ENCODE measurements at regions of chr9 and their contacts with region 1.

Region 1: DNA sequence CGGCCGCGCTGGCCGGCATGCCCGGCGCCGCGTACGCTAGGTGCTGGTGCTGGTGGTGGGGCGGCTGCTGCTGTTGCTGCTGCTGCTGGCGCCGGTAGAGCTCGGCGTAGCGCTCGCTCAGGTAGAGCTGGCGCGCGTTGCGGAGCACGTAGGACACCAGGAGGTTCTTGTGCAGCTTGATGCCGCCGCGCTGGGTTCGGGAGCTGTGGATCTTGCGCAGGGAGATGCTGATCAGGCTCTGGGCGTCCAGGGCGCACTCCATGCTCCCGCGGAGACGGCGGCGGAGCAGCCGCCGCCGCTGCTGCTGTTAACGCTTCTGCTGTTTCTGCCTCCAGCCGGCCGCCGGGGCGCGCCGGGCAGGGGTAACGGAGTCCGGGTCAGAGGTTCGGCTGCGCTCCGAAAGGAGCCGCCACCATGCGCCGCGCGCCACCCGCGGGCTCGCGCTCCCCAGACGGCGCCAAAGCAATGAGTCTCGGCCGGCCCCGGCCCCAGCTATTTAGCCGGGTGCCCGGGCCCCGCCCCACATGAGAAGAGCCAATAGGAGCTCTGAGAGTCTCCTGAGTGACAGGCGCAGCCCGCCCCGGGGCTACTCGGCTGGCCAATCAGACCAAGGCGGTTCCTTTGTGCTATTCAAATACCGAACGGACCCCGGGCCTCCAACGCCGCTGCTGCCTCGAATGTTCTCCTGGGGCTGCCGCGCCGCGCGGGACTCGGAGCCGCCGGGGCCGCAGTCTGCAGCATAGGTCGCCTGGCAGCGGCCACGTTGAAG is at the start of gene IER5L:
- DNase-seq: peak; percentile 99
- H3K4me3 ChIP-seq: peak within 1 kb of the TSS; percentile 90 to 98
- H3K27ac ChIP-seq: peak within 1 kb of the TSS; percentile 96 to 97
- H3K4me1 ChIP-seq: peaks cover 14 to 19% of the 10 kb centered on the region in 2 experiments; a peak in 3 of 4 replicates
- H3K27me3 ChIP-seq: no peaks in the 10 kb centered on the region
- CTCF ChIP-seq: peak; percentile 18; the same call in 1 of the 2 replicates
- EP300 ChIP-seq: no peak; a peak in 1 of 4 replicates
- RAD21 ChIP-seq: no peak; the same call in 1 of the 2 replicates
- polyA plus RNA-seq, gene IER5L: 8.9 and 16.2 TPM in 2 replicates

Region 2: DNA sequence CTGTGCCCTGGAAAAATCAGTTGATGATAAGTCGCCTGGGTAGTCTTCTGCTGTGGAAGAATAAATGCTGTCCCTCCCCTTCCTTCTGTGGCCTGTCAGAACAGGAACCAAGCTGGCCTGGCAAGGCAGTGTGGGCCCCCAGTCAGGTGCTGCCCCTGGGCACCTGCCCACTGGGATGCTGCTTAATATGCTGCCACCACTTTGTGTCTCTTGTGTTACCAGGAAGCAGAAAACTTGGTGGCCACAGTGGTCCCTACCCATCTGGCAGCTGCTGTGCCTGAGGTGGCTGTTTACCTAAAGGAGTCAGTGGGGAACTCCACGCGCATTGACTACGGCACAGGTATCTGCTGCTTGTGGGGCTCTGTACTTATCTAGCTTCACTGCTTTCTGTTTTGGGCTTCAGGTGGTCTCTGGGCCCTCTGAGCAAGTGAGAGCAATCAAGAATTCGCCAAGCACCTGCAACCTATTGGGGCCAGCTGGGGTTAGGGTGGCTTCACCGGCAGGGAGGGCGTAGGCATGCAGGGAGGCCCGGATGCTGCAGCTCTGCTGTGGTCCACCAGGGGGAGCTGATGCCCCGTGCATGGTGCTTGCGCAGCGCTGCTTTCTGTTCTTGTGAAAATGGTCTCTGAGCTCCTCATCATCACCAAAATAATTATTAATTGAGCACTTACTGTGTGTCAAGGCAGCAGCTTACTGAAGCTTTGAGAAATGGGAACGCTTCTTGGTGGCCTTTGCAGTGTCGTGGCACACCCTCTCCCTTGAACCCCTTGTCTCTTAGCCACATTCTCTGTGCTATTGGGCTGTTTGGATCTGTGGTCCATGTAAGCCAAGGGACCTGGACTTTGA is 46.5 kb before region 1 on chr9:
- CTCF ChIA-PET with region 1: interaction called, 193 read pairs
- POLR2A ChIA-PET with region 1: interaction called, 5 read pairs
- DNase-seq: peak; percentile 91
- H3K4me3 ChIP-seq: no peak overlapping the region
- H3K27ac ChIP-seq: no peak overlapping the region
- H3K4me1 ChIP-seq: peaks cover 0 to 11% of the 10 kb centered on the region in 2 experiments; a peak in 1 of 4 replicates
- H3K27me3 ChIP-seq: no peaks in the 10 kb centered on the region
- CTCF ChIP-seq: peak; percentile 97
- EP300 ChIP-seq: no peak
- RAD21 ChIP-seq: peak; percentile 85

Region 3: DNA sequence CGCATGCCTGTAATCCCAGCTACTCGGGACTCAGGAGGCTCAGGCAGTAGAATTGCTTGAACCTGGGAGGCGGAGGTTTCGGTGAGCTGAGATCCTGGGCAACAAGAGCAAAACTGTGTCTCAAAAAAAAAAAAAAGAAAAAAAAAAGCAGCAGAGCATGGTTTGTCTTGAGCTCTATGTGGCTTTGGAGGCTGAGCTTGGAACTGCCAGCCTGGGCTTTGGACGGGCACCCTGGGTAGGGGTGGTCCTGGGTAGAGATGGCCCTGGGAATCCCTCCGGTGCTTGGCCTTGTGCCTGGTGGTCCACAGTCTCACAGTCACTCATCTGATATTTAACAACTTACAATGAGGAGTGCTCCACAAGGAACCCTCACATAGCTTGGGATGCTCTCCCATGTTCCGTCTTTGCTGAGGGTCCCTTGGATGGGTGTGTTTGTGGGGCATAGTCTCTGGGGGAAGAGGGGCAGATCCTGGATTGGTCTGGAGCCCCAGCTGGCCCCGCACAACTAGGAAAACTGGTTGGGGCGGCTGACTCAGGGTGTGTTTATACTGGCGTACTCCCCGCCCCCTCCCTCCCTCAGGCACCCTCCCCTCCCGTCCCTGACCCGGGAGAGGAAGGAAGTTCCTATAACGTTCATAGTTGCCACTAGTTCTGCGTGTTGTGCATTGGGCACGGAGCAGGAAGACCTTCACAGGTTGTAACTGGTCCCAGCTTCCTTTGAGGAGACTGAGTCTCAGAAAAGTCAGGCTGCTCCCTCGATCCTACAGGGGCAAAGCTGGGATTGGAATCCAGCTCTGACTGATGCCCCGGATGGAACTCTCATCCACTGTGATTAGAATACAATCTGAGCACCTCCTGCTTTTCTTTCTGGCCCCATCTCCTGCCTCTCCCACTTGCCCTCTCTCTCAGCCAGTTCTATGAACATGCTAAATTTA is 11.1 kb before region 1 on chr9:
- CTCF ChIA-PET with region 1: interaction called, 13 read pairs
- POLR2A ChIA-PET with region 1: interaction called, 3 read pairs
- DNase-seq: no peak
- H3K4me3 ChIP-seq: no peak overlapping the region
- H3K27ac ChIP-seq: peak overlapping the region; percentile 6 to 80; a peak in 2 of 4 replicates
- H3K4me1 ChIP-seq: peaks cover 0 to 15% of the 10 kb centered on the region in 2 experiments; a peak in 3 of 4 replicates
- H3K27me3 ChIP-seq: no peaks in the 10 kb centered on the region
- CTCF ChIP-seq: no peak
- EP300 ChIP-seq: no peak
- RAD21 ChIP-seq: no peak

Region 4: GRCh38 chr9:129428864-129429590 is 251.1 kb after region 1 on chr9:
- CTCF ChIA-PET with region 1: interaction called, 7 read pairs
- POLR2A ChIA-PET with region 1: interaction called, 14 read pairs
- DNase-seq: no peak
- H3K4me3 ChIP-seq: no peak overlapping the region
- H3K27ac ChIP-seq: peak overlapping the region in 1 of 2 experiments; percentile 62; a peak in 2 of 4 replicates
- H3K4me1 ChIP-seq: peaks cover 0 to 44% of the 10 kb centered on the region in 2 experiments; a peak in 1 of 4 replicates
- H3K27me3 ChIP-seq: no peaks in the 10 kb centered on the region
- CTCF ChIP-seq: no peak
- EP300 ChIP-seq: no peak
- RAD21 ChIP-seq: no peak

Region 5: DNA sequence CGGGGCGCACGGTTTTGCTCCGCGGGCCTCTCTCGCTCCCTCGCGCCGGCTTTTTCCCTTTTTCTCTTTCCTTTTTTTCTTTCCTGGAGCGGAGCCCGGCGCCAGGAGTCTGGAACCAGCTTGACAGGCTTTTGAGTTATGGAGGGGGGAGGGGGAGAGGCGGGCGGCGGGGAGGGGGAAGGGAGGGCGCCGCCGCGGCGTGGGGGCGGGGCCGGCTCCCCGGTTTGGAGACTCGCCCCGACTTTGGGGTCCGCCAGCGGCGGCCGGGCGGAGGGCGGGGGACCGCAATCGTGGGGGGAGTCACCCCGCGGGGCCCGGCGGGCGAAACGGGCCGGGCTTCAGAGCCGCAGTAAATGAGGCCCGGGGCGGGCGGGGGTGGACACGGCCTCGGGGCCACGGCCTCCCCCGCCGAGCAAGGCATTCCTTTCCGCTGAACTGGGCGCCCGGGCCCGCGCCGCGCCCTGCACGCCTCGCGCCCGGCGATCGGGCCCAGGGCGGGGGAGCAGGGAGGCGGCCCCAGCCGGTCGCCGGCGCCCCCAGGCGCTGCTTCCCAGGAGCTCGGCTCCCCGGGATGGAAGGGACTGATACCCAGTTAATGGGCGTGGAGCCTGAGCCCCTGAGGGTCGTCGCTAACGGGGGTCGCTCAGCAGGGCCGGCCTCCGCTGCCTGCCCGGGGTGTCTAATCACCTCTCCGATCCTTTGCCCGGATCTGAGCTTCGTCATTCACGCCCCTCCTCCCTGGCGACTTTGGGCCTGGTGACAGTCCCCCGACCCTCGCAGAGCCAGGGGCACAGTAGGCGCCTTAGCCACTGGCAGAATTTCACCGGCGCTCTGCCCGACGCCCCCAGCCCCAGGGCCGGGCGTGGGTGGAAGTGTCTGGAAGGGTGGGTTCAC is 304.8 kb after region 1 on chr9:
- CTCF ChIA-PET with region 1: interaction called, 41 read pairs
- POLR2A ChIA-PET with region 1: interaction called, 11 read pairs
- DNase-seq: peak; percentile 90
- H3K4me3 ChIP-seq: peak overlapping the region; percentile 37 to 51; a peak in 3 of 4 replicates
- H3K27ac ChIP-seq: peak overlapping the region; percentile 97 to 100
- H3K4me1 ChIP-seq: peaks cover 55 to 78% of the 10 kb centered on the region in 2 experiments; a peak in 3 of 4 replicates
- H3K27me3 ChIP-seq: no peaks in the 10 kb centered on the region
- CTCF ChIP-seq: no peak
- EP300 ChIP-seq: peak in 1 of 2 experiments; percentile 53; a peak in 1 of 4 replicates
- RAD21 ChIP-seq: peak; percentile 35

Region 6: GRCh38 chr9:129619787-129620668 is 442.1 kb after region 1 on chr9:
- CTCF ChIA-PET with region 1: interaction called, 183 read pairs
- POLR2A ChIA-PET with region 1: interaction called, 6 read pairs
- DNase-seq: peak; percentile 87
- H3K4me3 ChIP-seq: peak overlapping the region; percentile 53 to 57
- H3K27ac ChIP-seq: peak overlapping the region in 1 of 2 experiments; percentile 60; a peak in 1 of 4 replicates
- H3K4me1 ChIP-seq: peaks cover 0 to 12% of the 10 kb centered on the region in 2 experiments; a peak in 1 of 4 replicates
- H3K27me3 ChIP-seq: no peaks in the 10 kb centered on the region
- CTCF ChIP-seq: peak; percentile 37; the same call in 1 of the 2 replicates
- EP300 ChIP-seq: no peak
- RAD21 ChIP-seq: no peak